ENCODE measurements at regions of chr6 and their contacts with region 1.

Region 1: GRCh38 chr6:17610835-17611234 is 10.7 kb downstream of the FAM8A1 start:
- DNase-seq: no peak
- H3K4me3 Mint-ChIP-seq: no peak overlapping the region
- H3K27ac Mint-ChIP-seq: no peak overlapping the region
- H3K4me1 Mint-ChIP-seq: no peaks in the 10 kb centered on the region
- H3K27me3 Mint-ChIP-seq: no peaks in the 10 kb centered on the region

Region 2: DNA sequence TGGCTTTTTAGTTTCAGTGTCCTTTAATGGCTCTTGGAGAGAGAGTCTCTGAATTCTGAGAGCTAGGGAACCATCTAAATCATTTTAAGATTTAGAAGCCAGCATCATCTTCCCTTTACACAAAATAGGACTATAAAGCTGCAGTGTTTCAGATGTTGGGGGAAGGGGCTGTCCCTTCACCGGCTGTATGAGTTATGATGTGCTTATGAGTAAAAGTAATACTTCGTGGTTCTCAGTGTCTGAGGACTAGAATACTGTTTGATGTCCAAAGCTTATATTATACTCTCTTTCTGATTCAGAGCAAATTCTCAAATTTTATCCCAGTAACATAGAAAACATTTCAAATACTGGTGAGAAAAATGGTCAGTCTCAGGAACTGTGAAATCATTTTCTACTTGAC is 74.2 kb before region 1 on chr6:
- CTCF ChIA-PET with region 1: no interaction called
- intact Hi-C with region 1: no loop called
- DNase-seq: peak; percentile 68
- H3K4me3 Mint-ChIP-seq: no peak overlapping the region
- H3K27ac Mint-ChIP-seq: no peak overlapping the region
- H3K4me1 Mint-ChIP-seq: peaks cover 5% of the 10 kb centered on the region
- H3K27me3 Mint-ChIP-seq: peaks cover 21% of the 10 kb centered on the region

Region 3: DNA sequence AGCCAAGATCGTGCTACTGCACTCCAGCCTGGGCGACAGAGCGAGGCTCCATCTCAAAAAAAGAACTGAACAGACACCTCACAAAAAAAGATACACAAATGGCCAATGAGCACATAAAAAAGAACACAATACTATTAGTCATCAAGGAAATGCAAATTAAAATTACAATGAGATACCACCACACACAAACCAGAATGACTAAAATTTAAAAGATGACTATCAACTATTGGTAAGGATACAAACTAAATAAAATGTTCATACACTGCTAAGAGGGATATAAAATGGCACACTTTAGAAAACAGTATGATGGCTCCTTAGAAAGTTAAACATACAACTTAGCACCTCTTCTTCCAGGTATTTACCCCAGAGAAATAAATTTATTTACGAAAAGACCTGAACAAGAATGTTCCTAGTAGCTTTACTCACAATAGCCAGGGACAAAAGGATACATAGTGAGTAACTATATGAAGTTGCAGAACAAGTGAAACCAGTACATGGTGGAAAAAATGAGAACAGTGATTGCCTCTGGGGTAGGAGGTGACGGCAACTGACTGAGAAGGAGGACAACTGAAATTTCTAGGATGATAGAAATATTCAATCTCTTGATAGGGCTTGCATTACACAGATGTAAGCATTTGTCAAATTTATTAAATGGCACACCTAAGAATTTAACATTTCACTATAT is 42.5 kb after region 1 on chr6:
- CTCF ChIA-PET with region 1: no interaction called
- intact Hi-C with region 1: loop called (anchors 5 kb)
- DNase-seq: no peak
- H3K4me3 Mint-ChIP-seq: no peak overlapping the region
- H3K27ac Mint-ChIP-seq: no peak overlapping the region
- H3K4me1 Mint-ChIP-seq: peaks cover 21% of the 10 kb centered on the region
- H3K27me3 Mint-ChIP-seq: no peaks in the 10 kb centered on the region

Region 4: DNA sequence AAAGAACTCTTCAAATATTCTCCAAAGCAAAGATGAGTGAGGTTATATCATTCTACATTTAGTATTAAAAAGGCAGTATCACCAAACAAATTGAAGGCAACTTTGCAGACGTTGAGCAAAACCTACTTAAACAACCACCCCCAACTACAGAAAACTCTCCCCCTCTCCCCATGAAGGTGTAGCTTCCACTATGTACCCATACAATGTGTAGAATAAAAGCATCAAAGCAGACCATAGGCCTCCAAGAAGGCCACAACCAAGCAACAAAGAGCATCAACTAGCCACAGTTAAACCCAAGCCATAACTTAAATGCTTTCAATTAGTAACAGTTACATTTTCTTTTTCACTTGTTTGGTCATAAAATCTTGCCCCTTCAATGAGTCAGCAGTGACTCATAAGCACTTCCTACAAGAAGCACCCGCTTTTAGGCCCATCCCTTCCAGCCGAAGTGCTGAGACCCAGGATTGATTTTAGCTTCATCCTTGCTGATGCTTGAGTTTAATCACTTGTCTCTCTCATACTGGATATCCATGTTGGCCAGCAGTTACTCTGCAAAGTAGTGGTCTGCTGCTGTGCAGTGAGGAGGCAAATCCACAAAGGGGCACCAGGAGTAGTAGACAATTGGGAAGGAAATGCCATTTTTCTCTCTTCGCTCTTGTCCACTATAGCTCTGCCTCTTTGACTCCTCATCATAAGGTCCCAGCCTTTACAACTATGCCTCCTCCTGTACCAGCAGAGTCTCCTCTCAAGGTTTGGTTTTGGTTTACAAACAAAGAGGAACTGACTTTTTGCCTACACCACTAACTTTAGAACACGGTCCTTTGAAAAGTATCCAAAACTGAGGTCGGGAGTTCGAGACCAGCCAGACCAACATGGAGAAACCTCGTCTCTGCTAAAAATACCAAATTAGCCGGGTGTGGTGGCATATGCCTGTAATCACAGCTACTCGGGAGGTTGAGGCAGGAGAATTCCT is 104.3 kb after region 1 on chr6:
- CTCF ChIA-PET with region 1: no interaction called
- intact Hi-C with region 1: no loop called
- DNase-seq: peak; percentile 63
- H3K4me3 Mint-ChIP-seq: no peak overlapping the region
- H3K27ac Mint-ChIP-seq: peak overlapping the region; percentile 74
- H3K4me1 Mint-ChIP-seq: peaks cover 11% of the 10 kb centered on the region
- H3K27me3 Mint-ChIP-seq: no peaks in the 10 kb centered on the region

Measured in activated naive CD4-positive, alpha-beta T cell treated with anti-CD3 and anti-CD28 coated beads for 36 hours (primary cell).